Gastrocnemius medialis (tissue), 4 donors: ENCODE measurements at regions of chr12 and their contacts with region 1.

Region 1: DNA sequence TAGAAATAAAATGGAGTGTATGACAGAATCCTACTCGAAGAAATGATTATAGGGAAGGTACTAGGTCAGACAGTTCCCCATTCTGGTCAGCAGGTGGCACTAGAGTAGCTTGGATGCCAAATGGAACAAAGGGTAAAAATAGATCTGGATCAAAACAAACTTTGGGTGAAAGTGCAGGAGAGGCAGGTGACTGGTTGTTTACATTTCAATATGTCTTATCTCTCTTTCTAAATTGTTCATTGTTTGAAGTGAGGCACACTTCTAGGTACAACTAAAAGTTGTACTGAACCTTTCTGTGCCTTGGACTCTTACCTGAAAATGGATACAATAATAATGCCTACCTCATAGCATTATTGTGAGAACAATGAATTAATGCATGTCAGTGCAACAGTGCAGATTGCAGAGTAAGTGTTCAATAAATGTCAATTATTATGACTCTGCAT is 62.0 kb upstream of the OSBPL8 start:
- DNase-seq: peak; percentile 31 to 63
- ATAC-seq: peak; percentile 93 to 94
- H3K4me3 ChIP-seq: no peak overlapping the region
- H3K27ac ChIP-seq: peak overlapping the region in 3 of 4 donors; percentile 10 to 56 (median 53)
- H3K4me1 ChIP-seq: peaks cover 3 to 6% of the 10 kb centered on the region in 2 donors
- H3K27me3 ChIP-seq: no peaks in the 10 kb centered on the region
- CTCF ChIP-seq: peak; percentile 91 to 98 (median 92)
- POLR2A ChIP-seq: no peak

Region 2: DNA sequence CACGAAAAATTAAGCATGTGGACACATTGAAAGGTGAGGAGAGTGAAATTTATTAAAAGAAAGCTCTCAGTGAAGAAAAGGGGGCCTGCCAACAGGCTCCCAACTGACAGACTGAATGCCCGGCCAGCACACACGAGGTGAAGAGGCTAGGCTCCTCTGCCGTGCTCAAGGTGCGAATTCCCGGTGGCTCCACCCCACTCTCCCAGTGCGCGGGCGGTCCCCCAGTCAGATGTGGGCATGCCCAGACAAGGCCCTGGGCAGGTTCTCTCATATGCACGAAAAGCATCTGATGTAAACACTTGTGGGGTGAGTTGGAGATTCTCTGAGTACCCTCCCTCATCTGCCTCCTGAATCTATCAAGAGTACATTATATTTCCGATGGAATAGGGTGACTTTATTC is 13.5 kb before region 1 on chr12:
- in situ Hi-C with region 1: no loop called
- intact Hi-C with region 1: no loop called
- DNase-seq: no peak
- ATAC-seq: no peak
- H3K4me3 ChIP-seq: no peak overlapping the region
- H3K27ac ChIP-seq: no peak overlapping the region
- H3K4me1 ChIP-seq: peaks cover 0 to 12% of the 10 kb centered on the region in 2 donors
- H3K27me3 ChIP-seq: no peaks in the 10 kb centered on the region
- CTCF ChIP-seq: no peak
- POLR2A ChIP-seq: no peak

Region 3: DNA sequence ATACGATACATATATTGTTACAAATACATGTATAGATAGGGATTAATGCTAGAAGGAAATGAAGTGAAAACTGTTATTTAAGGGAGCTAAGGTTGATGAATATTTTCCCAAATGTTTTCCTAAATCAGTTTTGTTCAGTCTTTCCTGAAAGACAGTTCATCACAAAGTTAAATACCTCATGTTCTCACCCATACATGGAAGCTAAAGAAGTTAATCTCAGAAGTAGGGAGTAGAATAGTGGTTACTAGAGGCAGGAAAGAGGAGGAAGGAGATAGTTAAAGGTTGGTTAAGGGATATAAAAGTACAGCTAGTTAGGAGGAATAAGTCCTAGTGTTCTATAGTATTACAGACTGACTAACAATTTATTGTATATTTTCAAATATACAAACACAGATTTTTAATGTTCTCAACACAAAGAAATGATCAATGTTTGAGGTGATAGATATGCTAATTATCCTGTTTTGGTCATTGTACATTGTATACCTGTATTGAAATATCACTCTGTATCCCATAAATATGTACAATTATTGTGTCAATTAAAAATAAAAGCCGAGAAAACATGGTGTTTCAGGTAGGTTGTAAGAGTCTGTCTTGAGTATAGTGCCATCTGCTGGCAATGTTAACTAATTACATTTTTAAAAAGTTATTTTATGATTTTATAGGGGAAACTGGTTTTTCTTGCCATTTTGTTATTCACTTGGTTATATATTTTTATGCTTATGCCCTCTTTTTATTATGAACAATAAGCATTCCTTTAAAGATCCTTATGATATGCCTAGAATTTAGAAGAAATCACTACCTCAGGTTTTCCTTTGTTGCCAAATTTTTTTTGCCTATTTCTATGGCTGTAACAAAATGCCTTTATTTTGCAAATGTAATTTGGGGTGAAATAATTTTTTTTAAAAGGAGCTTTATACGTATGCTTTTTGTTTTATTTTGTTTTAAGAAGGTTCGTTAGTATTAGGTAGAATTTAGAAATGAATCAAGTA is 169.3 kb after region 1 on chr12:
- in situ Hi-C with region 1: loop called (anchors 5 to 10 kb)
- intact Hi-C with region 1: loop called (anchors 1 kb)
- DNase-seq: no peak
- ATAC-seq: peak in 1 of 2 donors; percentile 58
- H3K4me3 ChIP-seq: no peak overlapping the region
- H3K27ac ChIP-seq: peak overlapping the region in 3 of 4 donors; percentile 27 to 59 (median 27)
- H3K4me1 ChIP-seq: peaks cover 33 to 40% of the 10 kb centered on the region in 2 donors
- H3K27me3 ChIP-seq: no peaks in the 10 kb centered on the region
- CTCF ChIP-seq: peak; percentile 70 to 96 (median 75)
- POLR2A ChIP-seq: no peak

Region 4: GRCh38 chr12:76820888-76821482 is 199.4 kb after region 1 on chr12:
- in situ Hi-C with region 1: no loop called
- intact Hi-C with region 1: loop called (anchors 1 kb)
- DNase-seq: no peak
- ATAC-seq: peak; percentile 47 to 66
- H3K4me3 ChIP-seq: no peak overlapping the region
- H3K27ac ChIP-seq: no peak overlapping the region
- H3K4me1 ChIP-seq: peaks cover 0 to 14% of the 10 kb centered on the region in 2 donors
- H3K27me3 ChIP-seq: no peaks in the 10 kb centered on the region
- CTCF ChIP-seq: peak in 4 of 5 experiments; percentile 16 to 65 (median 42)
- POLR2A ChIP-seq: no peak

Region 5: DNA sequence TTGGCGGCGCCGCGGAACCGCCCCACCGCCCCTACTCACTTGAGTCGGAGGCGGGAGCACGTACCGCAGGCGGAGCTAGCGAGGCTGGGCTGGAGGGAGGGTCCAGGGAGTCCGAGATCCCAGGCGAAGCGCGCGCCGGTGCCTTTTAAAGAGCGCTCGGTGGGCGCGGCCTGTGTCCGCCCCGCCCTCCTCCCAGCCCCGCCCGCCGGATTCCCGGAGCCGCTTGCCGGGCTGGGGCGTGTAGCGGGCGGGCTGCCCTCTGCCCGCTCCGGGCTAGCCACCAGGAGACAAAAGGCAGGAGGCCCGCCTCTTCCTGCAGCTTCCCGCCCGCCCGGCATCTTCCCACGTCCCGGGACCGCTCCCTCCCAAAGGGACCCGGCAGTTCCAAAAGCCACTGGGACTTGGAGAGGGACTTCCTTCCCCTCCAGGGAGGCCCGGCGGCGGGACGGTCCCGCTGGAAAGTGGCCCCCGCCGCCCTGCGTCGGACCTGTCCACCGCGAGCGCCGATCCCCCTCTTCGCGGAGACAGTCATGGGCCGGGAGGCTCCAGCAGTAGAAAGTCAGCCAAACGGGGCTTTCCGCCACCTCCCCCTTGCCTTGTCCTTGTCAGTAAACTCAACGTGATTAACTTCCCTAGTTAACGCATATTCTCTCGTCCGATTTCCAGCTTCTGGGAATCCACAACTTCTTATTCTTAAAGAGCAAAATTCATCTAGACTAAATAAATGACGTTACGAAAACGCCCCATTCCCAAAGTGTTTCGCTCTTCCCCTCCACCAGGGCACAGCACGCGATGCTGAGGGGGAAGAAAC is 257.5 kb after region 1 on chr12 and contains the start of gene CSRP2:
- in situ Hi-C with region 1: no loop called
- intact Hi-C with region 1: no loop called
- DNase-seq: peak; percentile 53 to 73
- ATAC-seq: peak; percentile 88 to 89
- H3K4me3 ChIP-seq: peak within 1 kb of the TSS; percentile 73 to 82 (median 78)
- H3K27ac ChIP-seq: peak within 1 kb of the TSS; percentile 76 to 82 (median 79)
- H3K4me1 ChIP-seq: peaks cover 13 to 16% of the 10 kb centered on the region in 2 donors
- H3K27me3 ChIP-seq: no peaks in the 10 kb centered on the region
- CTCF ChIP-seq: peak in 1 of 5 experiments; percentile 24
- POLR2A ChIP-seq: peak; percentile 65 to 89
- total RNA-seq, gene CSRP2: 6.9 to 24.2 (median 12.6) TPM